ENCODE measurements at regions of chr19 and their contacts with region 1.

Region 1: GRCh38 chr19:15432629-15433518 is 14.1 kb upstream of the AKAP8L start:
- DNase-seq: peak; percentile 81 to 88 (median 88)
- H3K4me3 ChIP-seq: peak overlapping the region; percentile 87 to 95 (median 90)
- H3K4me3 Mint-ChIP-seq: peak overlapping the region; percentile 96 to 99
- H3K27ac ChIP-seq: peak overlapping the region; percentile 67 to 74
- H3K27ac Mint-ChIP-seq: peak overlapping the region; percentile 84 to 95 (median 92)
- H3K4me1 ChIP-seq: peaks cover 26 to 31% of the 10 kb centered on the region in 2 donors
- H3K4me1 Mint-ChIP-seq: peaks cover 28% of the 10 kb centered on the region
- H3K27me3 ChIP-seq: no peaks in the 10 kb centered on the region
- H3K27me3 Mint-ChIP-seq: peaks cover 0 to 11% (median 0%) of the 10 kb centered on the region in 3 donors
- CTCF ChIP-seq: no peak

Region 2: DNA sequence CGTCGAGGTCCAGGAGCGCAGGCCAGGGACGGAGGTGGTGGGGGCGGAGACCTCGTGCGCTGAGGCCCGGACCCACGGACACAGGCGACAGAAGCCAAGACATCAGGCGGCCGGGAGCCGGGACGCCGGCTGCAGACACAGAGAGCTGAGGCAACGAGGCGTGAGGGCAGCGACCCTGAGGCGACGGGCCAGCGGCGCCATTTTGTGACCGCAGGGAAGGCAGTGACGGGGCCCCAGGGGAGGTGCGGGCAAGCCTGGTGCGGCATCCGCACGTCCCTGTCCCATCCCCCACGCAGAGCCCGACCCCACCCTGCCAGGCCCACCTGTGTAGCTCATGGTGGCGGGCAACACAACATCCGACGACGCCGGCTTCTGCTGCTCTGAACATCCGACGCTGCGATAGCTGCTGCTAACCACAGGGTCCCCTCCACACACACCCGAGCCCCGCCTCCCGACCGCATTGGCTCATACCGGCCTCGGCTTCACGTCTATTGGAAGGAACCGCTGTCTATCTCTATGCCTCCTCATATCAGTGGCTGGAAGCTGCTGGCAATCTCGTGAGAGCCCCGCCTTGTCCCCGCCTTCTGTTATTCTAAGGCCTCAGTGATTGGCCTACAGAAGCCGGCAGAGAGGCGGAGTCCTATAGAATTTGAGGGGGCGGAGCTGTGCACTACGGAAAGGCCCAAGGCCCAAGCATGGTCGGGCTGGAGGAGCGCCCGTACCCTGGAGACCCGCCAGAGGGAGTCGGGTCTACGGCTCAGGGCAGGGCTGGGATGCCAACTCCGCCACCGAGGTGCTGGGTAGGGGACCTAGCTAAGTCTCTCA is 14.1 kb before region 1 on chr19 and contains the start of gene AKAP8L:
- intact Hi-C with region 1: loop called in 1 of 2 experiments (anchors 2 kb)
- DNase-seq: peak; percentile 99 to 100 (median 99)
- H3K4me3 ChIP-seq: peak within 1 kb of the TSS; percentile 86 to 97 (median 97)
- H3K4me3 Mint-ChIP-seq: peak within 1 kb of the TSS; percentile 97 to 99
- H3K27ac ChIP-seq: peak within 1 kb of the TSS; percentile 55 to 92
- H3K27ac Mint-ChIP-seq: peak within 1 kb of the TSS; percentile 90 to 99 (median 97)
- H3K4me1 ChIP-seq: peaks cover 19 to 26% of the 10 kb centered on the region in 2 donors
- H3K4me1 Mint-ChIP-seq: peaks cover 31% of the 10 kb centered on the region
- H3K27me3 ChIP-seq: no peaks in the 10 kb centered on the region
- H3K27me3 Mint-ChIP-seq: no peaks in the 10 kb centered on the region
- CTCF ChIP-seq: peak; percentile 77
- polyA plus RNA-seq, gene AKAP8L: 21.4 to 103 (median 39.0) TPM

Region 3: DNA sequence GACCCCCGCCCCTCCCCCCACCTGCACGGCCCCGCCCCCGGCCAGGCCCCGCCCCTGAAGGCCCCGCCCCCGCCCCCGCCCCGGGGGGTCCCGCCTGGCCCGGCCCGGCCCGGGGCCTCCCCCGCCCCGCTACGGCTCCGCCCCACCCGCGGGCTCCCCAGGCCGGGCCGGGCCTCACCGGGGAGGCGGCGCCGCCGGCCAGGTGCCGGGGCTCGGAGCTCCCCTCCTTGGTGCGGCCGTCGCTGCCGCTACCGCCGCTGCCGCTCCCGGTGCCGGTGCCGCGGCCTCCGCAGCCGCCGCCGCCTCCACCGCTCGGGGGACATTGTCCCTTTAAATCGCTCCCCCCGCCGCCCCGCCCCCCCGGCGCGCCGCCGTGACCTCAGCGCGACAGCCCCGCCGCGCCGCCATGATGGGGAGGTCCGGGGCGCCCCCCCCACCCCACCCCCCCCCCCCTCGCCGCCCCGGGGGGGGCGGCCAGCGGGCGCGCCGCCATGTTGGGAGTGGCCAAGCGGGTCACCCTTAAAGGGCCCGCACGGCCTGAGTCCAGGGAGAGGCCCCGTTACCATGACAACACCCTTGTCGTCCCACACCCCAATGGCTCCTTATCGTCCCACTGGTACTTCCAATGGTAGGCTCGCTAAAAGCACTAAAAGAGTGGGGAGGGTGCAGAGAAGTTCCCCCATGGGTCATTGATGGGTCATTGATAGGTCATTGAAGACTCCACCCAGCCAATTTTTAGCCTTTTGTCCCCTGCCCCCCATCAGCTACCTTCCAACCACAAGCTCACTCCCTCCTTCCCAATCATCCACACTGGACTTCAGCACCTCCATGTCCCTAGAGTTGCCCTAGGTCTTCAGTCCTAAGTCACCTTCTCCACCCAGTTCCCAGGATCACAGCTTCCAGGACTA is 17.0 kb after region 1 on chr19 and contains the start of gene WIZ:
- intact Hi-C with region 1: loop called in 1 of 2 experiments (anchors 1 kb)
- DNase-seq: peak; percentile 53 to 72 (median 58)
- H3K4me3 ChIP-seq: peak within 1 kb of the TSS; percentile 43 to 76 (median 57)
- H3K4me3 Mint-ChIP-seq: peak within 1 kb of the TSS; percentile 73 to 79
- H3K27ac ChIP-seq: peak within 1 kb of the TSS; percentile 46 to 75
- H3K27ac Mint-ChIP-seq: peak within 1 kb of the TSS; percentile 84 to 94 (median 92)
- H3K4me1 ChIP-seq: peaks cover 11 to 12% of the 10 kb centered on the region in 2 donors
- H3K4me1 Mint-ChIP-seq: peaks cover 15% of the 10 kb centered on the region
- H3K27me3 ChIP-seq: no peaks in the 10 kb centered on the region
- H3K27me3 Mint-ChIP-seq: peaks cover 0 to 5% (median 0%) of the 10 kb centered on the region in 3 donors
- CTCF ChIP-seq: no peak
- polyA plus RNA-seq, gene WIZ: 0.47 to 13.7 (median 0.51) TPM

Measured in CD14-positive monocyte (primary cell).